MCF 10A (cell line): ENCODE measurements at regions of chr19 and their contacts with region 1.

Region 1: GRCh38 chr19:18771328-18772242 is 19.5 kb downstream of the COMP start:
- DNase-seq: no peak
- H3K4me3 Mint-ChIP-seq: no peak overlapping the region
- H3K27ac Mint-ChIP-seq: no peak overlapping the region
- H3K4me1 Mint-ChIP-seq: peaks cover 38% of the 10 kb centered on the region
- H3K27me3 Mint-ChIP-seq: no peaks in the 10 kb centered on the region
- CTCF ChIP-seq: no peak

Region 2: DNA sequence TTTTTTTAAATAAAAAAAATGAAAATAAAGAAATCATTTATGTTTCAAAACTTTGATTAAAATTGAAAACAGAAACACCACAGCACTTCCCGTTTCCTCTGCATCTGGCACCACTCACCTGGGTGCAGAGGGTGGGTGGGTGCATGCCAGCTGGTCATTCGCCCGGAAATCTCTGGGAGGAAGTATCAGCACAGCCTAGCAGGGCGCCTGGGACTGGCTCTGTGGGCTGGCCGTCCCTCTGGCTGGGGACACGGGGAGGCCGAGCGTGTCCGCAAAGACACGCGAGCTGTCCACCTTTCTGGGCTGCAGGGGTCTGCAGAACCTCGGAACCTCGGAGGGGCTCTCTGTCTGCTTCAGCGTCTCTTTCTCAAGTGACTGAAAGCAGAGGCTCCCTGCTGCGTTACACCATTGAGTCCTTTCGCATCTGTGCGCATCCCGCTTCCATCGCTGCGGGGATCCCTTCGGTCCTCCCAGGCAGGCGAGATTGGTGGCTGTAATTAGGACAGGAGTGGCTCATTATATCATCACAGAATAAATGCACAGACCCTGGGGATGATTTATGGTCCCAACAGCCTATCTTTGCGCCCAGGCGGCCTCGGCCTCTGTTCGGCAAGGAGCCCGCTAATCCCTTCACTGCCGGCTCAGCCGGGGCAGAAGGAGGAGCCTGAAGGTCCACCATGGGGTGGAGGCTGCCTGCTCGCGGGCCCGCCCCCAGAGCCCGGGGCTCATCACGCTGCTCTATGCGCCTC is 70.9 kb before region 1 on chr19:
- CTCF ChIA-PET with region 1: no interaction called
- POLR2A ChIA-PET with region 1: no interaction called
- intact Hi-C with region 1: no loop called
- DNase-seq: peak; percentile 48
- H3K4me3 Mint-ChIP-seq: peak overlapping the region; percentile 28
- H3K27ac Mint-ChIP-seq: no peak overlapping the region
- H3K4me1 Mint-ChIP-seq: peaks cover 13% of the 10 kb centered on the region
- H3K27me3 Mint-ChIP-seq: no peaks in the 10 kb centered on the region
- CTCF ChIP-seq: no peak

Region 3: GRCh38 chr19:18831524-18832305 is 60.1 kb after region 1 on chr19 and contains the start of gene UPF1:
- CTCF ChIA-PET with region 1: interaction called, 6 read pairs
- POLR2A ChIA-PET with region 1: interaction called, 4 read pairs
- intact Hi-C with region 1: loop called (anchors 5 kb)
- DNase-seq: peak; percentile 90
- H3K4me3 Mint-ChIP-seq: peak within 1 kb of the TSS; percentile 94
- H3K27ac Mint-ChIP-seq: peak within 1 kb of the TSS; percentile 98
- H3K4me1 Mint-ChIP-seq: peaks cover 25% of the 10 kb centered on the region
- H3K27me3 Mint-ChIP-seq: no peaks in the 10 kb centered on the region
- CTCF ChIP-seq: no peak
- total RNA-seq, gene UPF1: 79.8 and 85.0 TPM in 2 replicates